ENCODE measurements at regions of chr12 and their contacts with region 1.

Region 1: GRCh38 chr12:89663577-89664357 is 44.9 kb downstream of the ATP2B1 start:
- DNase-seq: peak; percentile 24
- H3K4me3 Mint-ChIP-seq: no peak overlapping the region
- H3K27ac Mint-ChIP-seq: no peak overlapping the region
- H3K4me1 Mint-ChIP-seq: peaks cover 67% of the 10 kb centered on the region
- H3K27me3 Mint-ChIP-seq: no peaks in the 10 kb centered on the region

Region 2: GRCh38 chr12:89575374-89575773 is 88.4 kb before region 1 on chr12:
- CTCF ChIA-PET with region 1: no interaction called
- POLR2A ChIA-PET with region 1: no interaction called
- intact Hi-C with region 1: no loop called
- DNase-seq: no peak
- H3K4me3 Mint-ChIP-seq: no peak overlapping the region
- H3K27ac Mint-ChIP-seq: no peak overlapping the region
- H3K4me1 Mint-ChIP-seq: no peaks in the 10 kb centered on the region
- H3K27me3 Mint-ChIP-seq: no peaks in the 10 kb centered on the region

Region 3: GRCh38 chr12:89636052-89636775 is 27.6 kb before region 1 on chr12:
- CTCF ChIA-PET with region 1: no interaction called
- POLR2A ChIA-PET with region 1: no interaction called
- intact Hi-C with region 1: loop called (anchors 2 kb)
- DNase-seq: peak; percentile 45
- H3K4me3 Mint-ChIP-seq: no peak overlapping the region
- H3K27ac Mint-ChIP-seq: peak overlapping the region; percentile 35
- H3K4me1 Mint-ChIP-seq: peaks cover 15% of the 10 kb centered on the region
- H3K27me3 Mint-ChIP-seq: no peaks in the 10 kb centered on the region

Region 4: DNA sequence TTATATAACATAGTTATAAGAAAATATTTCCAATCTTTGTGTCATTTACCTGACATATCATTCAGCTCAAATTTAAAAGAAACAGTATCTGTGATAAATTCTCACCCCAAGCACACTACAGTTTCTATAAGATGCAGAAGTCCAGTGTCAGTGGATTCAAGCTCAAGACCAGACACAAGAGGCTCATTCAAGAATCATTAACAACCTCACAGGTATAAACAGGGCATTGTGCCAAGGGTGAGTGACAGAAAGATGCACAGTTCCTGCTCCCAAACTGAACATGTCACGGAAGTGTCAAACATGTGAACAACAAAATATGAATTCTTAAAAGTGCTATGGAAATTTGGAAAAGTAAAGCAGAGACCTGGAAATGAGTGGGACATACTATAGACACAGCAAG is 32.1 kb after region 1 on chr12:
- CTCF ChIA-PET with region 1: interaction called, 4 read pairs
- POLR2A ChIA-PET with region 1: no interaction called
- intact Hi-C with region 1: loop called (anchors 2 kb)
- DNase-seq: no peak
- H3K4me3 Mint-ChIP-seq: no peak overlapping the region
- H3K27ac Mint-ChIP-seq: no peak overlapping the region
- H3K4me1 Mint-ChIP-seq: peaks cover 73% of the 10 kb centered on the region
- H3K27me3 Mint-ChIP-seq: no peaks in the 10 kb centered on the region

Region 5: GRCh38 chr12:90042920-90043641 is 379.3 kb after region 1 on chr12:
- CTCF ChIA-PET with region 1: no interaction called
- POLR2A ChIA-PET with region 1: no interaction called
- intact Hi-C with region 1: loop called (anchors 2 kb)
- DNase-seq: no peak
- H3K4me3 Mint-ChIP-seq: no peak overlapping the region
- H3K27ac Mint-ChIP-seq: no peak overlapping the region
- H3K4me1 Mint-ChIP-seq: peaks cover 9% of the 10 kb centered on the region
- H3K27me3 Mint-ChIP-seq: no peaks in the 10 kb centered on the region

Region 6: DNA sequence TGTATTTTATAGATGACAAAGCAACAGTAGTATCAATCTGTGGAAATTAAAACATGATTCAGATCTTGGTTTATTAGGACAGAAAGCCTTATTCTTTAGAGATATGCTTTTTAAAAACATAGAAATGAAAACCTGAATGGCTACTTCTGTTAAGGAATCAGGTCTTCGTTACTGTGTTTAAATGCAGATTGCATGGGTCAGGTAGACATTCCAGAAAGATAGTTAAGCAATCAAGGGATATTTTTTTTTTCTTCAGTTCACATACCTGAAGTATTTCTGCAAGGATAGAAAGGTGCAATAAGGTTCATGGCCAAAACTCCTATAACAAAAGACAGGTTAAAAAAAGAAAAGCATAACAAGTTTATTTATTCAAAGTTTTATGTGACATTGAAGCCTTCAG is 713.5 kb after region 1 on chr12:
- CTCF ChIA-PET with region 1: no interaction called
- POLR2A ChIA-PET with region 1: no interaction called
- intact Hi-C with region 1: no loop called
- DNase-seq: no peak
- H3K4me3 Mint-ChIP-seq: no peak overlapping the region
- H3K27ac Mint-ChIP-seq: no peak overlapping the region
- H3K4me1 Mint-ChIP-seq: no peaks in the 10 kb centered on the region
- H3K27me3 Mint-ChIP-seq: peaks cover 7% of the 10 kb centered on the region